PC-9 (cell line): ENCODE measurements at regions of chr1 and their contacts with region 1.

Region 1: GRCh38 chr1:81670286-81670685 is 130.4 kb upstream of the ADGRL2 start:
- DNase-seq: peak in 1 of 2 experiments; percentile 49
- H3K4me3 ChIP-seq: no peak overlapping the region
- H3K27ac ChIP-seq: no peak overlapping the region
- H3K4me1 ChIP-seq: peaks cover 7% of the 10 kb centered on the region; the same call in 1 of the 2 replicates
- H3K27me3 ChIP-seq: no peaks in the 10 kb centered on the region
- CTCF ChIP-seq: no peak

Region 2: GRCh38 chr1:81635816-81636215 is 34.5 kb before region 1 on chr1:
- CTCF ChIA-PET with region 1: interaction called, 14 read pairs
- POLR2A ChIA-PET with region 1: no interaction called
- intact Hi-C with region 1: no loop called
- DNase-seq: no peak
- H3K4me3 ChIP-seq: no peak overlapping the region
- H3K27ac ChIP-seq: no peak overlapping the region
- H3K4me1 ChIP-seq: no peaks in the 10 kb centered on the region
- H3K27me3 ChIP-seq: no peaks in the 10 kb centered on the region
- CTCF ChIP-seq: no peak